ENCODE measurements at regions of chr5 and their contacts with region 1.

Region 1: DNA sequence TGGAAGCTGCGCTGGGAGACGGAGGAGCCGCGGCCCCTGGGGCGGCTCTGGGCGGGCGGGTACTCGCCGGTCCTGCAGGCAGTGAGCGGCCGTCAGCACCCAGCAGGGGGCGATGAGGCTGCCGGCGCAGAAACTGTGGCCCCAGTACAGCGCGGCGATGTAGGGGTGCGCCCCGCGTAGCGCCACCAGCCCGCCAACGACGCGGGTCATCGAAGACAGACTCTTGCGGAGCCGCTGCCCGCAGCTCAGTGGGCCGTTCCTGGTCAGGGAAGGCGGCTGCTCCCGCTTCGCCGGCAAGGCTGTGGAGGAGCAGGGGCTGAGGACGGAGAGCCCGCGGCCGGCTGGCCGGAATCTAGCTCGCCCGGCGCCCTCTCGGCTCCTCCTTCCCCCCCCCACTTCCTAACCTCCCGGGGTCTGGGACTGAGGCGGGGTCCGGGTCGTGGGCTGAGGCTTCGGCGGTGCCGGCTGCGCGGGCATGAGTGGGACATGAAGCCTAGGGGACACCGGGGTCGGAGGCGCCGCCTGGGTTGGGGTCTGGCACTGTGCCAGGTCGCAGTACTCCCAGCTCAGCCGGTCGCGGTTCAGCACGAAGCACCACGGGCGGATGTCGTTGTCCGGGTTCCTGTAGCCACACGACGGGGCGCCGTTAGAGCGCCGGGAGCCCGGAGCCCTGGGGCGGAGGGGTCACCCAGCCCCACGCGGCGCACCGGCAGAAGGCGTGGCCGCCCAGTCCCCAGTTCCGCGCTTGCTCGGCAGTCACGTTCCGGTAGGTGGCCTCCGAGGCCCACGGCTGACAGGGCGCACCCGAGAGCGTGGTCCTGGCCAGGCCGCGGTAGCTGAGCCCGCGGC is 3.6 kb upstream of the PFN3 start:
- DNase-seq: peak; percentile 87
- H3K4me3 Mint-ChIP-seq: peak overlapping the region; percentile 64
- H3K27ac Mint-ChIP-seq: peak overlapping the region; percentile 36
- H3K4me1 Mint-ChIP-seq: peaks cover 36% of the 10 kb centered on the region
- H3K27me3 Mint-ChIP-seq: peaks cover 30% of the 10 kb centered on the region

Region 2: GRCh38 chr5:177162379-177162778 is 241.6 kb before region 1 on chr5:
- CTCF ChIA-PET with region 1: no interaction called
- POLR2A ChIA-PET with region 1: no interaction called
- DNase-seq: no peak
- H3K4me3 Mint-ChIP-seq: no peak overlapping the region
- H3K27ac Mint-ChIP-seq: no peak overlapping the region
- H3K4me1 Mint-ChIP-seq: no peaks in the 10 kb centered on the region
- H3K27me3 Mint-ChIP-seq: no peaks in the 10 kb centered on the region

Region 3: GRCh38 chr5:177311723-177312648 is 92.0 kb before region 1 on chr5 and contains the start of gene MXD3:
- CTCF ChIA-PET with region 1: interaction called, 19 read pairs
- POLR2A ChIA-PET with region 1: no interaction called
- DNase-seq: peak; percentile 99
- H3K4me3 Mint-ChIP-seq: peak within 1 kb of the TSS; percentile 97
- H3K27ac Mint-ChIP-seq: peak within 1 kb of the TSS; percentile 96
- H3K4me1 Mint-ChIP-seq: peaks cover 55% of the 10 kb centered on the region
- H3K27me3 Mint-ChIP-seq: no peaks in the 10 kb centered on the region
- total RNA-seq, gene MXD3: 107 to 109 TPM

Region 4: DNA sequence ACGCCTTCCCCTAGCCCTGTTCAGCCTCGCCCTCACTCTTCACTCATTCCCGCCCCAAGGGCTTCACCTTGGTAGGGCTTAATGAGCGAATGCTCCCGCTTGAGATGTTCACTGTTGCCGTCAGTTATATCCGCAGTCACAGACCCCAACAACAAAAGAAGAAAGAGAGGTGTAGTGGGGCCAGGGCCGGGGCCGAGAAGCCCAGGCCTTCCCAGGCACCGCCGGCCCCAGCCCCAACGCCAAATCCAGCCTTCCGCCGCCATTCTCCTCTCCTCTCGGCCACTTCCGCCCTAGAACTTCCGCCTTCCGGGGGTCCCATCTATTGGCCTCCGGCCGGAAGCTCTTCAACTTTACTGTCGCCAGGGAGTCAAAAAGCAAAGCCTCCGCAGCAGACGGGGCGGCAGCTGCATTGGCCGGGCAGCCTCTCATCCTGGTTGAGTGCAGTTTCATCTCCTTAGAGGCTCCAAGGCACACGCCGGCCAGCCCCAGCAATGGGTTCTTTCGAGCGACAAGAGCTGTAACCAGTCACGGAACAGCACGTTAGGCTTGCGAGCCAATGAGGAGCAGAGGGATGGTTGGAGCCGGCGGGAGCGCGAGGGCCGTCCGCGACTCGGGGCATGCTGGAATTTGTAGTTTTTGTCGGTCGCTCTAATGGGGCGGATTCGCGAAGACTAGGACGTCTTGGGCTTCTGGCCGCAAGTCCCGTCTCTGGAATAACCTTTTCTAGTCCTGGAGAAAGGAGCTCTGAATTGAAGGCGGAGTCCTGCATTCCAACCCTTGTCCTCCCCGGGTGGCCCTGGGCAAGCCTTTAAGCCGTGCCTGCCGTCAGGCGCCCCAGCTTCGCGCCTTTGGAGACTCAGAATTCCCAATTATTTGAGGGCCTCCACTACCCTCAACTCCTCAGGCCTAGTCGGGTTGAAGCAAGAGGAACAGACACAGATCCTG is 52.4 kb before region 1 on chr5 and contains the start of gene LMAN2:
- CTCF ChIA-PET with region 1: interaction called, 15 read pairs
- POLR2A ChIA-PET with region 1: no interaction called
- DNase-seq: peak; percentile 95
- H3K4me3 Mint-ChIP-seq: peak within 1 kb of the TSS; percentile 93
- H3K27ac Mint-ChIP-seq: peak within 1 kb of the TSS; percentile 100
- H3K4me1 Mint-ChIP-seq: peaks cover 75% of the 10 kb centered on the region
- H3K27me3 Mint-ChIP-seq: no peaks in the 10 kb centered on the region
- total RNA-seq, gene LMAN2: 123 to 132 TPM

Region 5: GRCh38 chr5:177384134-177384533 is 19.9 kb before region 1 on chr5 and contains the start of gene SLC34A1:
- CTCF ChIA-PET with region 1: interaction called, 156 read pairs
- POLR2A ChIA-PET with region 1: no interaction called
- DNase-seq: no peak
- H3K4me3 Mint-ChIP-seq: no peak within 1 kb of the TSS
- H3K27ac Mint-ChIP-seq: peak within 1 kb of the TSS; percentile 57
- H3K4me1 Mint-ChIP-seq: peaks cover 39% of the 10 kb centered on the region
- H3K27me3 Mint-ChIP-seq: peaks cover 5% of the 10 kb centered on the region
- total RNA-seq, gene SLC34A1: 0.12 to 0.27 TPM

Region 6: GRCh38 chr5:177500685-177501522 is 96.9 kb after region 1 on chr5:
- CTCF ChIA-PET with region 1: interaction called, 23 read pairs
- POLR2A ChIA-PET with region 1: no interaction called
- DNase-seq: peak; percentile 83
- H3K4me3 Mint-ChIP-seq: no peak overlapping the region
- H3K27ac Mint-ChIP-seq: no peak overlapping the region
- H3K4me1 Mint-ChIP-seq: peaks cover 22% of the 10 kb centered on the region
- H3K27me3 Mint-ChIP-seq: peaks cover 18% of the 10 kb centered on the region

Region 7: GRCh38 chr5:177568326-177568725 is 164.3 kb after region 1 on chr5:
- CTCF ChIA-PET with region 1: no interaction called
- POLR2A ChIA-PET with region 1: no interaction called
- DNase-seq: no peak
- H3K4me3 Mint-ChIP-seq: no peak overlapping the region
- H3K27ac Mint-ChIP-seq: no peak overlapping the region
- H3K4me1 Mint-ChIP-seq: peaks cover 5% of the 10 kb centered on the region
- H3K27me3 Mint-ChIP-seq: no peaks in the 10 kb centered on the region